CD8-positive, alpha-beta T cell (primary cell): ENCODE measurements at regions of chr2 and their contacts with region 1.

Region 1: DNA sequence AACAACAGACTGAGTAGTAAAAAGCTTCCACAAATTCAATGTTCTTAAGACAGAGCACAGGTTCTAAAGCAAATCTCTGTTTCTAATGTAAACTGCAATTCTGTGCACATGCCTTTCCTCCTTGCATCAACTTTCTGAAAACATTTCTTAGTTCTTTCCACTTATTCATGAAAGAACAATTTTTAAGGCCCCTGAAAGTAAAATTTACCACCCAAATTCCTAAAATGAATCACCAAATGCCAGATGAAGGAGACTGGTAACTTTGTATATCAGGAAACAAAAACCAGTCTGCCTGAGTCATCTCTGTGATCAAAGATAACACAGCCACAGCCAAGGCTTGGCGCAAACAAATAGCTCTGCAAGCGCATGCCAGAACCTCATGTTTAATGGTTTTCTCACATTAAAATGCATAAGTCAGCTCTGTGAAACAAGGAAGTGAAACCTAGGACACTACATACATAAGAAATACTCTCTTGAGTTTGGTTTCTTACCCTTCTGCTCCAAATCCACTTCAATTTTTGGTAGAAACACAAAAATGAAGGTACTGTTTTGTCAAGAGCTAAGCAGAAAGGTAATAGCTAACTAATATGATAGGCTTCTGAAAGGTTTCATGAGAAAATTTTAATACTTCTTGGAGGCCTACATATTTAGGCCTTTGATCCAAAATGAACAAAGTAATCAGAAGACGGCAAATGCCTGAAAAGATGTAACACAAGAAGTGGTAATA is 169.4 kb downstream of the THADA start:
- DNase-seq: peak; percentile 9 to 77 (median 66)
- ATAC-seq: peak; percentile 95
- H3K4me3 ChIP-seq: no peak overlapping the region
- H3K4me3 Mint-ChIP-seq: no peak overlapping the region
- H3K27ac ChIP-seq: peak overlapping the region; percentile 27 to 75
- H3K27ac Mint-ChIP-seq: peak overlapping the region; percentile 76
- H3K4me1 ChIP-seq: peaks cover 31% of the 10 kb centered on the region
- H3K4me1 Mint-ChIP-seq: peaks cover 40% of the 10 kb centered on the region
- H3K27me3 ChIP-seq: no peaks in the 10 kb centered on the region
- H3K27me3 Mint-ChIP-seq: no peaks in the 10 kb centered on the region
- CTCF ChIP-seq: no peak

Region 2: GRCh38 chr2:43412121-43412753 is 14.2 kb before region 1 on chr2:
- CTCF ChIA-PET with region 1: no interaction called
- POLR2A ChIA-PET with region 1: no interaction called
- intact Hi-C with region 1: no loop called
- DNase-seq: no peak
- ATAC-seq: no peak
- H3K4me3 ChIP-seq: no peak overlapping the region
- H3K4me3 Mint-ChIP-seq: no peak overlapping the region
- H3K27ac ChIP-seq: no peak overlapping the region
- H3K27ac Mint-ChIP-seq: no peak overlapping the region
- H3K4me1 ChIP-seq: no peaks in the 10 kb centered on the region
- H3K4me1 Mint-ChIP-seq: peaks cover 6% of the 10 kb centered on the region
- H3K27me3 ChIP-seq: no peaks in the 10 kb centered on the region
- H3K27me3 Mint-ChIP-seq: no peaks in the 10 kb centered on the region
- CTCF ChIP-seq: no peak

Region 3: GRCh38 chr2:43467891-43468290 is 41.4 kb after region 1 on chr2:
- CTCF ChIA-PET with region 1: no interaction called
- POLR2A ChIA-PET with region 1: no interaction called
- intact Hi-C with region 1: loop called in 1 of 2 experiments (anchors 5 kb)
- DNase-seq: no peak
- ATAC-seq: no peak
- H3K4me3 ChIP-seq: no peak overlapping the region
- H3K4me3 Mint-ChIP-seq: no peak overlapping the region
- H3K27ac ChIP-seq: no peak overlapping the region
- H3K27ac Mint-ChIP-seq: no peak overlapping the region
- H3K4me1 ChIP-seq: no peaks in the 10 kb centered on the region
- H3K4me1 Mint-ChIP-seq: no peaks in the 10 kb centered on the region
- H3K27me3 ChIP-seq: no peaks in the 10 kb centered on the region
- H3K27me3 Mint-ChIP-seq: no peaks in the 10 kb centered on the region
- CTCF ChIP-seq: no peak